ENCODE measurements at regions of chr10 and their contacts with region 1.

Region 1: GRCh38 chr10:63465293-63466143 is at the start of gene JMJD1C:
- DNase-seq: peak; percentile 75
- H3K4me3 Mint-ChIP-seq: peak within 1 kb of the TSS; percentile 97
- H3K27ac Mint-ChIP-seq: peak within 1 kb of the TSS; percentile 93
- H3K4me1 Mint-ChIP-seq: peaks cover 19% of the 10 kb centered on the region
- H3K27me3 Mint-ChIP-seq: no peaks in the 10 kb centered on the region
- CTCF ChIP-seq: no peak
- total RNA-seq, gene JMJD1C: 91.9 and 101 TPM in 2 replicates

Region 2: DNA sequence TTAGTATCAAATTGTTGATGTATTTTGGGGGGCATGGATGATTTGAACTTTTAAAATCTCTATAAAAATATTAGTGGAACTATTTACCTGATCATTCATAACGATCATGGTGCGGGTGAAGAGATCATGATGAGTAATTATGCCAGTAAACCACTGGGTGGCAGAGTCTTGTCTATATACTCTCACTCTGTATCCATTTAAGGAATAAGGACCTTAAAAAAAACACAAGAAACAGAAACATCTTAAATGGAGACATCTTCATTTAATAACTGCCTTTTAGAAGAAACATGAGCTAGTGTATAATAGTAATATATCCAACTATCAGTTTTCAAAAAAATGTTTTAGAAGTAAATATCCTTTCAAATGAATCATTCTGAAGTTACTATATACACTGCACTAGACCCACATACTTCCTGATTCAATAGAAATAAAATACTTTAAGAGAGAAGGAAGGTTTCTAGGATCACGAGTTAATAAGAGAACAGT is 248.4 kb before region 1 on chr10:
- CTCF ChIA-PET with region 1: interaction called, 4 read pairs
- POLR2A ChIA-PET with region 1: interaction called, 11 read pairs
- intact Hi-C with region 1: loop called (anchors 5 kb)
- DNase-seq: peak; percentile 66
- H3K4me3 Mint-ChIP-seq: no peak overlapping the region
- H3K27ac Mint-ChIP-seq: peak overlapping the region; percentile 39
- H3K4me1 Mint-ChIP-seq: peaks cover 10% of the 10 kb centered on the region
- H3K27me3 Mint-ChIP-seq: no peaks in the 10 kb centered on the region
- CTCF ChIP-seq: peak; percentile 56

Region 3: GRCh38 chr10:63261496-63261895 is 204.0 kb before region 1 on chr10:
- CTCF ChIA-PET with region 1: interaction called, 6 read pairs
- POLR2A ChIA-PET with region 1: interaction called, 140 read pairs
- intact Hi-C with region 1: no loop called
- DNase-seq: no peak
- H3K4me3 Mint-ChIP-seq: no peak overlapping the region
- H3K27ac Mint-ChIP-seq: peak overlapping the region; percentile 54
- H3K4me1 Mint-ChIP-seq: peaks cover 43% of the 10 kb centered on the region
- H3K27me3 Mint-ChIP-seq: no peaks in the 10 kb centered on the region
- CTCF ChIP-seq: no peak

Region 4: GRCh38 chr10:63491588-63492316 is 26.2 kb after region 1 on chr10:
- CTCF ChIA-PET with region 1: no interaction called
- POLR2A ChIA-PET with region 1: interaction called, 48 read pairs
- intact Hi-C with region 1: no loop called
- DNase-seq: peak; percentile 91
- H3K4me3 Mint-ChIP-seq: peak overlapping the region; percentile 38
- H3K27ac Mint-ChIP-seq: peak overlapping the region; percentile 72
- H3K4me1 Mint-ChIP-seq: peaks cover 17% of the 10 kb centered on the region
- H3K27me3 Mint-ChIP-seq: no peaks in the 10 kb centered on the region
- CTCF ChIP-seq: no peak

Region 5: GRCh38 chr10:63521416-63522276 is 56.1 kb after region 1 on chr10:
- CTCF ChIA-PET with region 1: interaction called, 5 read pairs
- POLR2A ChIA-PET with region 1: interaction called, 205 read pairs
- intact Hi-C with region 1: loop called (anchors 2 kb)
- DNase-seq: peak; percentile 65
- H3K4me3 Mint-ChIP-seq: peak overlapping the region; percentile 86
- H3K27ac Mint-ChIP-seq: peak overlapping the region; percentile 83
- H3K4me1 Mint-ChIP-seq: peaks cover 46% of the 10 kb centered on the region
- H3K27me3 Mint-ChIP-seq: no peaks in the 10 kb centered on the region
- CTCF ChIP-seq: no peak

Region 6: DNA sequence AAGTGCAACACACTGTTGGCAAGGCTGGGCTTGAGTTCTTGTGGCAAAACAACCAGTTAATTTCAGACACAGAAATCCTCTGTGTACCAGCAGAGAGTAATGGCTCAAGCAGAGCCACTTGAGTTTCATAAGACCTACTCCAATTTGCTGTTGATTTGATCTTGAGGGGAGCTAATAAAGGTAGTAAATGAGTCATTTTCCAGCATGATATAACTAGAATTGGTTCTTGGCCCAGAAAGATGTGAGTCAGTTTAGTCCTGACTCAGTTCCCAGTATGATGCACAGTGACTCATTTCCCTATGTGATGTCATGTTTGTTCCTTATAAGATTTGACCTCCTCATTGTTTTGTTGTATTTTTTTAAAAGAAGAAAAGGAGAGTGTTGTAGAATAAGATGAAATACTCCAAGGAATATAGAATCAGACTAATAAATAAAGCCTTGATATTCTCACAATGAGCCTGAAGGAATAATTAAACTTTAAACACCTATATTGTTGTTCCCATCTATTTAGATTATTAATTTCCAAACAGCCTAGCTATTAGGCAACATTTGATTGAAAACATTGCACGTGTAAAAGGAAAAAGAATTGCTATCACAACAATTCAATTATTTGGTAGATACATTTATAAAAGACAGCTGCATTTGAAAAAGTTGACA is 241.9 kb after region 1 on chr10:
- CTCF ChIA-PET with region 1: interaction called, 3 read pairs
- POLR2A ChIA-PET with region 1: interaction called, 7 read pairs
- intact Hi-C with region 1: loop called (anchors 10 kb)
- DNase-seq: peak; percentile 98
- H3K4me3 Mint-ChIP-seq: no peak overlapping the region
- H3K27ac Mint-ChIP-seq: peak overlapping the region; percentile 61
- H3K4me1 Mint-ChIP-seq: peaks cover 42% of the 10 kb centered on the region
- H3K27me3 Mint-ChIP-seq: no peaks in the 10 kb centered on the region
- CTCF ChIP-seq: no peak

Measured in MCF 10A (cell line).